Activated T-helper 1 cell treated with anti-CD3 and anti-CD28 coated beads, Interleukin-12 subunit alpha, Interleukin-12 subunit beta, Interleukin-2, Interleukin-4 antibody, amounts not matched to agents 30 ng/mL and 10 ng/mL and 1 ng/mL, durations not matched to agents 14 hours and 24 hours and 36 hours (primary cell): ENCODE measurements at regions of chr1 and their contacts with region 1.

Region 1: GRCh38 chr1:53326088-53326597 is 1.7 kb downstream of the LRP8 start:
- DNase-seq: peak; percentile 94
- H3K4me3 Mint-ChIP-seq: peak overlapping the region; percentile 96
- H3K27ac Mint-ChIP-seq: peak overlapping the region; percentile 96
- H3K4me1 Mint-ChIP-seq: peaks cover 44% of the 10 kb centered on the region
- H3K27me3 Mint-ChIP-seq: no peaks in the 10 kb centered on the region

Region 2: GRCh38 chr1:52365746-52366516 is 960.2 kb before region 1 on chr1 and contains the start of gene CC2D1B:
- intact Hi-C with region 1: loop called (anchors 5 kb)
- DNase-seq: peak; percentile 100
- H3K4me3 Mint-ChIP-seq: peak within 1 kb of the TSS; percentile 90
- H3K27ac Mint-ChIP-seq: peak within 1 kb of the TSS; percentile 84
- H3K4me1 Mint-ChIP-seq: peaks cover 55% of the 10 kb centered on the region
- H3K27me3 Mint-ChIP-seq: no peaks in the 10 kb centered on the region
- total RNA-seq, gene CC2D1B: 40.5 and 42.3 TPM in 2 replicates

Region 3: GRCh38 chr1:53014791-53015507 is 311.2 kb before region 1 on chr1:
- intact Hi-C with region 1: loop called (anchors 1 kb)
- DNase-seq: peak; percentile 78
- H3K4me3 Mint-ChIP-seq: peak overlapping the region; percentile 91
- H3K27ac Mint-ChIP-seq: peak overlapping the region; percentile 61
- H3K4me1 Mint-ChIP-seq: peaks cover 23% of the 10 kb centered on the region
- H3K27me3 Mint-ChIP-seq: no peaks in the 10 kb centered on the region

Region 4: GRCh38 chr1:53278201-53278725 is 47.9 kb before region 1 on chr1:
- intact Hi-C with region 1: loop called (anchors 1 kb)
- DNase-seq: peak; percentile 59
- H3K4me3 Mint-ChIP-seq: no peak overlapping the region
- H3K27ac Mint-ChIP-seq: no peak overlapping the region
- H3K4me1 Mint-ChIP-seq: no peaks in the 10 kb centered on the region
- H3K27me3 Mint-ChIP-seq: no peaks in the 10 kb centered on the region

Region 5: DNA sequence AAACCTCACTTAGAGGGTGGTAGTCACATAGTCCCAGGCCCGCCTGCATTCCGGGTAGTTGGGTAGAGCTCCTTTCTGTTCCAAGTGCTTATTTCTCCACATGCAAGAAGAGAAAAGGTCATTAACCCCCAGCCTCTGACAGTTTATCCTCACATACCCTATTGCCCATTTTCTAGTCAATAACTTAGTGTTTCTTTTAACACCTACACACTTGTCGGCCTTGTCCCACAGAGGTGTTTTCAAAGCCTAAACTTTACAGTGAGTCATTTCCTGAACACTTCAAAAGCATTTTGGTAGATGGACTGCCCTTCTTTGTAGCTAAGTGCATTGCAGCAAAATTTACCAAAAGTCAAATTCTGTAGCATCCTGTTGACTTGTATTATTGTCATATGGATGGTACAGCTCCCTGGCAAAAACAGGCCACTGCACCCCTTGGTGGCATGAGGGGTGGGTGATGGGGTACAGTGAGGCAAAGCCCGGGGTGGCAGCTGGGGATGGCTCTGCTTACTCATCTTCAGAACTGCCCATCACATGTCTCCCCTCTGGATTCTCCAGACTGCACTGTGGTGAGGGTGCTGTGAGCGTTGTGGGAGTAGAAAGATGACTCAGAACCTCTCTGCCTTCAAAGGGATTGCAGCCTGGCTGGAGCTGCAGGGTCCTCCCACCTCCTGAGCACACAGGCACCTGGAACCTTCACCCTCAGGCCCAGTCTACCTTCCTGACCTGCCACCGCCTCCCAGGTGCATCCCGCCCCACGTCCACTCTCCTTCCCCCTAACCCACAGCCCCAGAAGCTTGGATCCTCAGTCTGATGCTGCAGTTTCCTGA is 87.2 kb after region 1 on chr1:
- intact Hi-C with region 1: loop called (anchors 1 kb)
- DNase-seq: peak; percentile 73
- H3K4me3 Mint-ChIP-seq: peak overlapping the region; percentile 68
- H3K27ac Mint-ChIP-seq: peak overlapping the region; percentile 95
- H3K4me1 Mint-ChIP-seq: peaks cover 86% of the 10 kb centered on the region
- H3K27me3 Mint-ChIP-seq: no peaks in the 10 kb centered on the region

Region 6: GRCh38 chr1:54052934-54053744 is 727.0 kb after region 1 on chr1 and contains the starts of genes TCEANC2 and TMEM59:
- intact Hi-C with region 1: loop called (anchors 1 kb)
- DNase-seq: peak; percentile 98
- H3K4me3 Mint-ChIP-seq: no peak within 1 kb of the TSS
- H3K27ac Mint-ChIP-seq: no peak within 1 kb of the TSS
- H3K4me1 Mint-ChIP-seq: peaks cover 27% of the 10 kb centered on the region
- H3K27me3 Mint-ChIP-seq: no peaks in the 10 kb centered on the region
- total RNA-seq, gene TCEANC2: 11.8 and 12.0 TPM in 2 replicates
- total RNA-seq, gene TMEM59: 119 and 133 TPM in 2 replicates

Region 7: GRCh38 chr1:55321942-55322341 is 1995.8 kb after region 1 on chr1:
- intact Hi-C with region 1: no loop called
- DNase-seq: no peak
- H3K4me3 Mint-ChIP-seq: no peak overlapping the region
- H3K27ac Mint-ChIP-seq: no peak overlapping the region
- H3K4me1 Mint-ChIP-seq: peaks cover 5% of the 10 kb centered on the region
- H3K27me3 Mint-ChIP-seq: peaks cover 4% of the 10 kb centered on the region